ENCODE measurements at regions of chr1 and their contacts with region 1.

Region 1: DNA sequence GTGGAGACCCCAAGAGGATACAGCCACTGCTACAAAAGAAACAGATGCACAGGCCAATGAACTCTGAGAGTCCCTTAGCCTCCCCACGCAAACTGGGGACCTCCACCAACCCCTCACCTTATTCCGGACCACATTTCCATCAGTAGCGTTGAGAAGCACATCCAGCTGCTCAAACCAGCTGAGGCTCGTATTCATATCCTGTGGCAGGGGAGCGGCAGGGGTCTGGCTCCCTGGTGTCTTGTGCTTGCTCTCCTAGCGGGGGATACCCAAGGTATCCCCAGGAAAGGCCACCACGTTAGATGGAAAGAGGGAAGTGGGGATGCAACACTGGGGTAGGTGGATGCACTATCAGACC is 481 bp downstream of the CCDC163 start:
- DNase-seq: peak in 1 of 5 donors; percentile 4
- H3K4me3 ChIP-seq: peak overlapping the region; percentile 62 to 88
- H3K4me3 Mint-ChIP-seq: peak overlapping the region; percentile 91 to 96 (median 95)
- H3K27ac ChIP-seq: peak overlapping the region; percentile 62
- H3K27ac Mint-ChIP-seq: peak overlapping the region; percentile 81 to 98 (median 96)
- H3K4me1 ChIP-seq: peaks cover 18% of the 10 kb centered on the region
- H3K4me1 Mint-ChIP-seq: peaks cover 31 to 34% (median 31%) of the 10 kb centered on the region in 4 donors
- H3K27me3 ChIP-seq: no peaks in the 10 kb centered on the region
- H3K27me3 Mint-ChIP-seq: no peaks in the 10 kb centered on the region

Region 2: GRCh38 chr1:45291716-45292115 is 207.7 kb before region 1 on chr1:
- CTCF ChIA-PET with region 1: no interaction called
- POLR2A ChIA-PET with region 1: no interaction called
- intact Hi-C with region 1: no loop called
- DNase-seq: no peak
- H3K4me3 ChIP-seq: no peak overlapping the region
- H3K4me3 Mint-ChIP-seq: no peak overlapping the region
- H3K27ac ChIP-seq: no peak overlapping the region
- H3K27ac Mint-ChIP-seq: no peak overlapping the region
- H3K4me1 ChIP-seq: no peaks in the 10 kb centered on the region
- H3K4me1 Mint-ChIP-seq: no peaks in the 10 kb centered on the region
- H3K27me3 ChIP-seq: no peaks in the 10 kb centered on the region
- H3K27me3 Mint-ChIP-seq: no peaks in the 10 kb centered on the region

Region 3: GRCh38 chr1:45512641-45513054 is 13.3 kb after region 1 on chr1:
- CTCF ChIA-PET with region 1: interaction called, 25 read pairs
- POLR2A ChIA-PET with region 1: interaction called, 3 read pairs
- intact Hi-C with region 1: no loop called
- DNase-seq: peak; percentile 42 to 60 (median 47)
- H3K4me3 ChIP-seq: no peak overlapping the region
- H3K4me3 Mint-ChIP-seq: no peak overlapping the region
- H3K27ac ChIP-seq: no peak overlapping the region
- H3K27ac Mint-ChIP-seq: peak overlapping the region in 3 of 7 donors; percentile 18 to 68 (median 24)
- H3K4me1 ChIP-seq: no peaks in the 10 kb centered on the region
- H3K4me1 Mint-ChIP-seq: peaks cover 3 to 14% (median 7%) of the 10 kb centered on the region in 4 donors
- H3K27me3 ChIP-seq: no peaks in the 10 kb centered on the region
- H3K27me3 Mint-ChIP-seq: no peaks in the 10 kb centered on the region

Region 4: GRCh38 chr1:45550401-45551351 is 51.3 kb after region 1 on chr1 and contains the start of gene AKR1A1:
- CTCF ChIA-PET with region 1: interaction called, 4 read pairs
- POLR2A ChIA-PET with region 1: interaction called, 10 read pairs
- intact Hi-C with region 1: loop called (anchors 1 kb)
- DNase-seq: peak; percentile 86 to 89 (median 88)
- H3K4me3 ChIP-seq: peak within 1 kb of the TSS; percentile 82 to 87
- H3K4me3 Mint-ChIP-seq: peak within 1 kb of the TSS; percentile 95 to 98 (median 96)
- H3K27ac ChIP-seq: peak within 1 kb of the TSS; percentile 79
- H3K27ac Mint-ChIP-seq: peak within 1 kb of the TSS; percentile 92 to 98 (median 97)
- H3K4me1 ChIP-seq: peaks cover 23% of the 10 kb centered on the region
- H3K4me1 Mint-ChIP-seq: peaks cover 14 to 31% (median 22%) of the 10 kb centered on the region in 4 donors
- H3K27me3 ChIP-seq: no peaks in the 10 kb centered on the region
- H3K27me3 Mint-ChIP-seq: no peaks in the 10 kb centered on the region
- total RNA-seq, gene AKR1A1: 84.3 to 89.8 TPM